Activated naive CD4-positive, alpha-beta T cell treated with anti-CD3 and anti-CD28 coated beads for 36 hours (primary cell): ENCODE measurements at regions of chr5 and their contacts with region 1.

Region 1: GRCh38 chr5:34929150-34929719 is at the start of gene DNAJC21:
- DNase-seq: peak; percentile 99
- H3K4me3 Mint-ChIP-seq: peak within 1 kb of the TSS; percentile 94
- H3K27ac Mint-ChIP-seq: peak within 1 kb of the TSS; percentile 94
- H3K4me1 Mint-ChIP-seq: peaks cover 37% of the 10 kb centered on the region
- H3K27me3 Mint-ChIP-seq: no peaks in the 10 kb centered on the region
- total RNA-seq, gene DNAJC21: 59.1 to 62.1 TPM

Region 2: GRCh38 chr5:34007621-34008600 is 921.3 kb before region 1 on chr5 and contains the start of gene AMACR:
- CTCF ChIA-PET with region 1: no interaction called
- intact Hi-C with region 1: loop called (anchors 5 kb)
- DNase-seq: peak; percentile 83
- H3K4me3 Mint-ChIP-seq: peak within 1 kb of the TSS; percentile 75
- H3K27ac Mint-ChIP-seq: peak within 1 kb of the TSS; percentile 89
- H3K4me1 Mint-ChIP-seq: peaks cover 26% of the 10 kb centered on the region
- H3K27me3 Mint-ChIP-seq: no peaks in the 10 kb centered on the region
- total RNA-seq, gene AMACR: 8.6 to 10.1 TPM

Region 3: DNA sequence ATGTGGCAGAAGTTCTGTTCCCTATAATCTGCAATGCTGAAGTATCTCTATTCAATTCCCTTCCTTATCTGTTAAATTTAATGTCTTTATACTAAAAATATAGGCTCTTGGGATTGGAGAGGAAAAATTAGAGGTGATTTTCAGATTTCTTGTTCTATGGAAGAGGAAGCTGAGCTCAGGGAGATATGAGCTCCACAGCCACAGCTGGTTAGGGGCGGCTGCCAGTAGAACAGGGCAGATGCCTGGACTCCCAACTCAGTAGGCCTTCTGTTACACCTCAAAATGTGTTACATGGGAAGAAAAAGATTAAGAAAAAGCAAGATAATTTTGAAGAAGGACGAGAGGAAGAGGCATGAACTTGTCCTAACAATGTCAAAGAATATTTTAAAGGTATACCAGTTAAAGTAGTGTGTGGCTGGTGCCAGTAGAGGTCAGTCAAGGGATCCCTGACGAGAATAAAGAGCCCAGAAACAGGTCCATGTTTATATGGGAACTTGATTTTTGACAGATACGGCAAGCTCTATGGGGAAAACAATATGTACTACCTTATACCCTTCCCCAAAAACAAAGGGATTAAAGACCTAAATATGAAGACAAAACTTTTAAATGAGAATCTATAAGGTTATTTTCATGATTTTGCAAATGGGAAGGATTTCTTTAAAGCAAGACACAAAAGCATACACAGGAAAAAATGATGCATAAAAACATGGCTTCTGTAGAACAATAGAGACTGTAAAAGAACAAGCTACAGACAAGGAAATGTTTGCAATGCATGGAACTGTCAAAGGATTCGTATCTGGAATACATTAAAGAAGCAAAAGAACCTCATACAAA is 28.8 kb after region 1 on chr5:
- CTCF ChIA-PET with region 1: no interaction called
- intact Hi-C with region 1: loop called (anchors 2 kb)
- DNase-seq: peak; percentile 32
- H3K4me3 Mint-ChIP-seq: no peak overlapping the region
- H3K27ac Mint-ChIP-seq: no peak overlapping the region
- H3K4me1 Mint-ChIP-seq: peaks cover 14% of the 10 kb centered on the region
- H3K27me3 Mint-ChIP-seq: no peaks in the 10 kb centered on the region

Region 4: DNA sequence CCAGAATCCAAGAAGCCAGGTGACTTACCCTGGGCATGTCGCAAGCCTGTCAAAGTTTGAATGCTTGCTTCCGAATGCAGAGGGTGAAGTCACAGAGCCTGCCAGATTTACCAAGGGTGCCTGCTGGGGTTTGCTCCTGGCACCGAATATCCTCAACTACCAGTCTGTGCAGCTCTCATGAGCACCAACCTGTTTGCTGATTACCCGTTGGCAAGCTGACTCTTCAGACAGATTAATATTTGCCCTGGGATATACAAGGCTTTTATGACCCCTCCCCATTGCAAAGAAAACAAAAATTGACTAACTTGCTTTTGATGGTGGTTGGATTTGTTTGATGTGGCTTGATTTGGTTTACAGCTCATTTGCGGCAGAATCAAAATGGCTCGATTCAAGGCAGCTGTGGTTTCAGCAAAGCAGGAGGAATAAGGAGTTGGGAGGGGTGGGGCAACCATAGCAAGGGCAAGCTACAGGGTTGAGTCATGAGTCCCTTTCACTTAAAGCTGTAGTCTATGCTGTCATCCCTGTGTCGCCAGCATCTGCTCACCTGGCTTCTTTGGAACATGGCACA is 200.8 kb after region 1 on chr5:
- CTCF ChIA-PET with region 1: no interaction called
- intact Hi-C with region 1: loop called (anchors 1 kb)
- DNase-seq: peak; percentile 76
- H3K4me3 Mint-ChIP-seq: no peak overlapping the region
- H3K27ac Mint-ChIP-seq: no peak overlapping the region
- H3K4me1 Mint-ChIP-seq: peaks cover 18% of the 10 kb centered on the region
- H3K27me3 Mint-ChIP-seq: peaks cover 55% of the 10 kb centered on the region

Region 5: DNA sequence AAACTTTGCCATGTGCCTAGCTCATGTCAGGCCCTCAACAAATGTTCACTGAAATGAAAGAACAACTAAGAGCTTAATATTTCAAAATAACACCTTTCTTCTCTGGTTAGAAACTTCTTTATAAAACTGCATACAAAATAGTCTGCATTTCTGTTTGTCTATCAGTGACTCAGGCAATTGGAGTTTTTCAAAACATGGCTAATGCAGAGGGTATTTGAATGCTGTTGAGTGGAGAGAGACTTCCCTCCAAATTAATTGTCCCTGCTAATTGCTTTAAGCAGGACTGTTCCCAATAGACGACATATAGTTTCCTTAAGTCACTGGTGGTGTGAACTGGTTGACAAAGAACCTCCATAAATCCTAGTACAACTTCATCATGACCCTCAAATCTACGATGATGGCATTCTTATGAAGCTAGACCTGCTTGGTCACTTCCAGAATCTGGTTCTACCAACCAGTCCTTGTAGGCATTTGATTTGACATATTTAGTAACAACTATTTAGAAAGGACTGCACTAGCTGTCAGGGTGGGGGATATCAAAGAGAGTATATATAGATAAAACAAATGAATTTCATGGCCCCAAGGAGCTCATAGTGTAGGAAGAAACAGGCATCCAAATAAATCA is 216.6 kb after region 1 on chr5:
- CTCF ChIA-PET with region 1: no interaction called
- intact Hi-C with region 1: no loop called
- DNase-seq: no peak
- H3K4me3 Mint-ChIP-seq: no peak overlapping the region
- H3K27ac Mint-ChIP-seq: no peak overlapping the region
- H3K4me1 Mint-ChIP-seq: no peaks in the 10 kb centered on the region
- H3K27me3 Mint-ChIP-seq: peaks cover 25% of the 10 kb centered on the region

Region 6: GRCh38 chr5:35785601-35786085 is 856.4 kb after region 1 on chr5:
- CTCF ChIA-PET with region 1: no interaction called
- intact Hi-C with region 1: loop called (anchors 10 kb)
- DNase-seq: peak; percentile 76
- H3K4me3 Mint-ChIP-seq: peak overlapping the region; percentile 32
- H3K27ac Mint-ChIP-seq: peak overlapping the region; percentile 88
- H3K4me1 Mint-ChIP-seq: peaks cover 79% of the 10 kb centered on the region
- H3K27me3 Mint-ChIP-seq: no peaks in the 10 kb centered on the region